ENCODE measurements at regions of chr1 and their contacts with region 1.

Region 1: DNA sequence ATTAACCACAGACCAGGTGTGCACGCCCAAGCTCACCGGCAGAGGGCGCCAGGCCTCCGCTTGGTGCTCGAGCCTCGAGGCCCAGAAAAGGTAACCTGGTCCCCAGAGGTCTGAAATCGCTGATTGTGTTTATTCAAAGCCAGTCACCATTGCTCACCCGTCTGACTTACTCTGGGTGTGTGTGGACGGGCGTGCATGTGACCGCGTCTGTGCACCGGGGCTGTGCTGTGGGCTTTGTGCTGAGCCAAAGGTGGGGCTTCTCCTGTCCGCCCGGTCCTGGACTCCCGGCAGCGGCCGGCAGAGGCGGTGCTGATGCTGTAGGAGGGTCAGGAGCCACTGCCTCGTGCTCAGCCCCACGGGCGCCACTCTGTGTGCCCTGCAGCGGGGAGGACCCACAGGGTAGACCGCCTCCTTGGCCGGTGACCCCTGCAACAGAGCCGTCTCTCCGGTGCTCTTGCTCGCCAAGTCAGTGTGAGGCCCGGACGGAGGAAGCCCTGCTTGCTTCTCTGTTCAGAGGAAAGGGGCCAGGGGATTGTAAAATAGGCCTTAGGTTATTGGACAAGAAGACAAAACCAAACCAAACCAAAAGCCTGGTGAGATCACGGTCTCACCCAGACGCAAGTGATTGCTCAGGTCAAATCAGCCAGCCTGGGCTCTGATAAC is 32.0 kb upstream of the BTG2 start:
- DNase-seq: peak; percentile 82
- ATAC-seq: peak; percentile 75
- H3K4me3 ChIP-seq: no peak overlapping the region
- H3K27ac ChIP-seq: no peak overlapping the region
- H3K4me1 ChIP-seq: peaks cover 10% of the 10 kb centered on the region; the same call in 1 of the 2 replicates
- H3K27me3 ChIP-seq: no peaks in the 10 kb centered on the region; the same call in 1 of the 2 replicates
- CTCF ChIP-seq: peak; percentile 90
- POLR2A ChIP-seq: no peak
- RAD21 ChIP-seq: peak; percentile 94

Region 2: GRCh38 chr1:202688375-202688774 is 585.0 kb before region 1 on chr1:
- CTCF ChIA-PET with region 1: no interaction called
- POLR2A ChIA-PET with region 1: no interaction called
- dilution Hi-C with region 1: no loop called
- in situ Hi-C with region 1: no loop called
- intact Hi-C with region 1: no loop called
- DNase-seq: no peak
- ATAC-seq: no peak
- H3K4me3 ChIP-seq: no peak overlapping the region
- H3K27ac ChIP-seq: no peak overlapping the region
- H3K4me1 ChIP-seq: no peaks in the 10 kb centered on the region
- H3K27me3 ChIP-seq: peaks cover 64% of the 10 kb centered on the region
- CTCF ChIP-seq: no peak
- POLR2A ChIP-seq: no peak
- RAD21 ChIP-seq: no peak

Region 3: DNA sequence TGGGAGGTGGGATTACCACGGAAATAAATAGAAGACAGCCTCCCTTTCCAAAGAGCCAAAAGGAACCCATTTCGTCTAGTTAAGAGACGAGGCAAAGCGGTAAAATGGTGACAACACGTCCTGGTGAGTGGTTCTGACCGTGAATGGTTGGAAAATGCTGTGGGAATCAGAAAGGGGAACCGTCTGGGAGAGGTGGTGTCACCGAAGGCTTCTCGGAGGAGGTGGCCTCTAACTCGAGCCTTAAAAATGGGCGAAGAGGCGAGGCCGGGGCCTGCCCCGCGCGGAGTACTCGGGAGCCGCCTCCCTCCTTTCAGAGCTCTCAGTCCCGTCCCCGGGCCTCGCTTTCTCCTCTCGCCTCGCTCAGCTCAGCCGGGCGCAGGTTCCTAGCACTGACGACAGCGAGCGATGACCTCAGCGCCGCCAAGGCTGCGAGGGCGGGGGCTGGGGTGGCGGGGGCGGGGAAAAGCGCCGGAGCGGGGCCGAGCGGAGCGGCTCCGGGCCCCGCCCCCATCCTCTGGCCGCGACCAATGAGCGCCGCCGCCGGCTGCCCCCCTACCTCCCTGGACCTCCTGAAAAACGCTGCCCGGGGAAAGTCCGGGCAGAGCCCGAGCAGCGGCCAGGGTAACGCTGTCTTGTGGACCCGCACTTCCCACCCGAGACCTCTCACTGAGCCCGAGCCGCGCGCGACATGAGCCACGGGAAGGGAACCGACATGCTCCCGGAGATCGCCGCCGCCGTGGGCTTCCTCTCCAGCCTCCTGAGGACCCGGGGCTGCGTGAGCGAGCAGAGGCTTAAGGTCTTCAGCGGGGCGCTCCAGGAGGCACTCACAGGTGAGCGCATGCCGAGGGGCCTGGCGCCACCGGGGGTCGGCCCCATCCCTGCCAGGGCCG is 31.8 kb after region 1 on chr1 and contains the start of gene BTG2:
- CTCF ChIA-PET with region 1: interaction called, 6 read pairs
- POLR2A ChIA-PET with region 1: no interaction called
- dilution Hi-C with region 1: no loop called
- in situ Hi-C with region 1: no loop called
- intact Hi-C with region 1: loop called (anchors 1 kb)
- DNase-seq: peak; percentile 86
- ATAC-seq: peak; percentile 95
- H3K4me3 ChIP-seq: peak within 1 kb of the TSS; percentile 62
- H3K27ac ChIP-seq: peak within 1 kb of the TSS; percentile 81
- H3K4me1 ChIP-seq: peaks cover 7% of the 10 kb centered on the region
- H3K27me3 ChIP-seq: peaks cover 15% of the 10 kb centered on the region
- CTCF ChIP-seq: no peak
- POLR2A ChIP-seq: peak; percentile 99
- RAD21 ChIP-seq: no peak
- total RNA-seq, gene BTG2: 8.4 and 10.3 TPM in 2 replicates

Region 4: DNA sequence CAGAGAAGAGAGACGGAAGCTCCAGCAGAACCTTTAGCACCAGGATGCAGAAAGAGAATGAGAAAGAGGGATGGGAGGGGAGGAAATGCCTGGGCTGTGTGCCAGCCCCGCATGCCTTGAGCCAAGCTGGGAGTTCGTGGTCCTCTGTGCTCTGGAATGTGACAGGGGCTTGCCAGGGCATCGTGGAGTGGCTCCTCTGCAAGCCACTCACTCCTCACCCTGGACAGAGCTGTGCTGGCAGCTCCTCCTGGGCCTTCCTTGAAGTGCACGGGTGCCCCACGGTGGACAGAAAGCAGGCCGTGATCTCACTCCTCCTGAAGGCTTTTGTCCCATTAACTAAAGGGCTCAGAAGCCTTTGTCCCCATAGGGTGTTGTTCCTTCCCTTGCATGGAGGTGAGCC is 167.4 kb after region 1 on chr1:
- CTCF ChIA-PET with region 1: interaction called, 8 read pairs
- POLR2A ChIA-PET with region 1: no interaction called
- dilution Hi-C with region 1: no loop called
- in situ Hi-C with region 1: loop called (anchors 10 kb)
- intact Hi-C with region 1: loop called (anchors 2 kb)
- DNase-seq: peak; percentile 72
- ATAC-seq: peak; percentile 99
- H3K4me3 ChIP-seq: no peak overlapping the region
- H3K27ac ChIP-seq: no peak overlapping the region
- H3K4me1 ChIP-seq: peaks cover 7% of the 10 kb centered on the region; the same call in 1 of the 2 replicates
- H3K27me3 ChIP-seq: peaks cover 24% of the 10 kb centered on the region
- CTCF ChIP-seq: peak; percentile 73
- POLR2A ChIP-seq: no peak
- RAD21 ChIP-seq: peak; percentile 85

Region 5: GRCh38 chr1:203486618-203487370 is 213.5 kb after region 1 on chr1:
- CTCF ChIA-PET with region 1: interaction called, 3 read pairs
- POLR2A ChIA-PET with region 1: no interaction called
- dilution Hi-C with region 1: no loop called
- in situ Hi-C with region 1: loop called (anchors 5 kb)
- intact Hi-C with region 1: loop called (anchors 1 kb)
- DNase-seq: no peak
- ATAC-seq: no peak
- H3K4me3 ChIP-seq: no peak overlapping the region
- H3K27ac ChIP-seq: peak overlapping the region; percentile 72
- H3K4me1 ChIP-seq: peaks cover 3% of the 10 kb centered on the region; the same call in 1 of the 2 replicates
- H3K27me3 ChIP-seq: no peaks in the 10 kb centered on the region
- CTCF ChIP-seq: no peak
- POLR2A ChIP-seq: no peak
- RAD21 ChIP-seq: no peak

Region 6: GRCh38 chr1:203584035-203584434 is 310.7 kb after region 1 on chr1:
- CTCF ChIA-PET with region 1: no interaction called
- POLR2A ChIA-PET with region 1: no interaction called
- dilution Hi-C with region 1: no loop called
- in situ Hi-C with region 1: no loop called
- intact Hi-C with region 1: no loop called
- DNase-seq: peak; percentile 61
- ATAC-seq: peak; percentile 48
- H3K4me3 ChIP-seq: no peak overlapping the region
- H3K27ac ChIP-seq: no peak overlapping the region
- H3K4me1 ChIP-seq: no peaks in the 10 kb centered on the region
- H3K27me3 ChIP-seq: no peaks in the 10 kb centered on the region
- CTCF ChIP-seq: no peak
- POLR2A ChIP-seq: no peak
- RAD21 ChIP-seq: no peak

Measured in IMR-90 (cell line).